ENCODE measurements at regions of chr19 and their contacts with region 1.

Region 1: GRCh38 chr19:36139473-36140303 is at the start of gene CAPNS1:
- DNase-seq: peak; percentile 91 to 96
- ATAC-seq: peak; percentile 68 to 88 (median 78)
- H3K4me3 ChIP-seq: peak within 1 kb of the TSS; percentile 94
- H3K4me3 Mint-ChIP-seq: peak within 1 kb of the TSS; percentile 96
- H3K27ac ChIP-seq: peak within 1 kb of the TSS; percentile 76
- H3K27ac Mint-ChIP-seq: peak within 1 kb of the TSS; percentile 88 to 90
- H3K4me1 ChIP-seq: peaks cover 19% of the 10 kb centered on the region
- H3K4me1 Mint-ChIP-seq: peaks cover 17 to 29% of the 10 kb centered on the region in 2 donors
- H3K27me3 ChIP-seq: no peaks in the 10 kb centered on the region
- H3K27me3 Mint-ChIP-seq: no peaks in the 10 kb centered on the region
- CTCF ChIP-seq: no peak
- total RNA-seq, gene CAPNS1: 569 to 637 (median 578) TPM

Region 2: DNA sequence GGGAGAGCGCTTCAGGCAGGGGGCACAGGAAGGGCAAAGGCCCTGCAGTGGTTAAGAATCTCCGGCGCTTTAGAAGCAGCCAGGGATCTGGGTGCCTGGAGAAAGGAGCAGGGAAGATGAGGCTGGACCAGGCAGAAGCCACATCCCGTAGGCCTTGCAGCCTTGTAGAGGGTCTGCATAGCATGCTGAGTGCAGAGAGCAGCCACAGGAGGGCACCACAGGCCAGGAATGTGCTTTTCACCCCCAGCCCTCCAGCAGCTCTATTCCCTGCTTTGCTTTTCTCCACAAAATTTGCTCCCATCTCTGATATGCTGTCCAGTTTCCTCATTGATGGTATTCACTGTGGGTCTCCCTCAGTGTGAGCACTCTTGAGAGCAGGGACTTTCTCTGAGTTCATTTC is 79.3 kb before region 1 on chr19:
- intact Hi-C with region 1: no loop called
- DNase-seq: peak in 1 of 2 donors; percentile 48
- ATAC-seq: peak in 1 of 3 donors; percentile 46
- H3K4me3 ChIP-seq: no peak overlapping the region
- H3K4me3 Mint-ChIP-seq: no peak overlapping the region
- H3K27ac ChIP-seq: no peak overlapping the region
- H3K27ac Mint-ChIP-seq: no peak overlapping the region
- H3K4me1 ChIP-seq: peaks cover 2% of the 10 kb centered on the region
- H3K4me1 Mint-ChIP-seq: peaks cover 3 to 7% of the 10 kb centered on the region in 2 donors
- H3K27me3 ChIP-seq: no peaks in the 10 kb centered on the region
- H3K27me3 Mint-ChIP-seq: no peaks in the 10 kb centered on the region
- CTCF ChIP-seq: no peak

Region 3: DNA sequence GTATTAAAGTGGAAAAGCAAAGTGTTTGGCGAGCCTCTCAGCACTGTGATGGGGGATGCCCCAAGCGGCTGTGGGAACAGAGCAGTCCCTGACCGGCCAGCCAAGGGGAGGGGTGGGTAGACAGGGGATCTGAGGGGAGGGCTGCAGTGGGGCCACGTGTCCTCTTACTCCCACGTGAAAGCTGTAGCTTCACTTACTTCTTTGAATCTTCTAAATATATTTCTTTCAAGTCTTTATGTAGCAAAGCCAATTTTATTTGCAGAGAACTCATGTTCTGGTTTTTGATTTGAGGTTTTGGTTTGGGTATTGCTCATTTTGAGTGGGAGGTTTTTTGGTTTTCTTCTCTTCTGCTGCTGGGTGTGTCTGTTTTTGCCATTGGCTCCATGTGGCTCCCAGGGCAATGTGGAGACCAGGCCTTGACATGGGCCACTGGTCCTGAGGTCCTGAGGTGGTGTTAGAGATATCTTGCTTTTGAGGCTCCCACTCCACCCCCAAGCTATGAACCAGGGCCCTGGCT is 46.5 kb before region 1 on chr19:
- intact Hi-C with region 1: no loop called
- DNase-seq: no peak
- ATAC-seq: no peak
- H3K4me3 ChIP-seq: no peak overlapping the region
- H3K4me3 Mint-ChIP-seq: no peak overlapping the region
- H3K27ac ChIP-seq: no peak overlapping the region
- H3K27ac Mint-ChIP-seq: no peak overlapping the region
- H3K4me1 ChIP-seq: no peaks in the 10 kb centered on the region
- H3K4me1 Mint-ChIP-seq: no peaks in the 10 kb centered on the region
- H3K27me3 ChIP-seq: no peaks in the 10 kb centered on the region
- H3K27me3 Mint-ChIP-seq: no peaks in the 10 kb centered on the region
- CTCF ChIP-seq: no peak

Region 4: DNA sequence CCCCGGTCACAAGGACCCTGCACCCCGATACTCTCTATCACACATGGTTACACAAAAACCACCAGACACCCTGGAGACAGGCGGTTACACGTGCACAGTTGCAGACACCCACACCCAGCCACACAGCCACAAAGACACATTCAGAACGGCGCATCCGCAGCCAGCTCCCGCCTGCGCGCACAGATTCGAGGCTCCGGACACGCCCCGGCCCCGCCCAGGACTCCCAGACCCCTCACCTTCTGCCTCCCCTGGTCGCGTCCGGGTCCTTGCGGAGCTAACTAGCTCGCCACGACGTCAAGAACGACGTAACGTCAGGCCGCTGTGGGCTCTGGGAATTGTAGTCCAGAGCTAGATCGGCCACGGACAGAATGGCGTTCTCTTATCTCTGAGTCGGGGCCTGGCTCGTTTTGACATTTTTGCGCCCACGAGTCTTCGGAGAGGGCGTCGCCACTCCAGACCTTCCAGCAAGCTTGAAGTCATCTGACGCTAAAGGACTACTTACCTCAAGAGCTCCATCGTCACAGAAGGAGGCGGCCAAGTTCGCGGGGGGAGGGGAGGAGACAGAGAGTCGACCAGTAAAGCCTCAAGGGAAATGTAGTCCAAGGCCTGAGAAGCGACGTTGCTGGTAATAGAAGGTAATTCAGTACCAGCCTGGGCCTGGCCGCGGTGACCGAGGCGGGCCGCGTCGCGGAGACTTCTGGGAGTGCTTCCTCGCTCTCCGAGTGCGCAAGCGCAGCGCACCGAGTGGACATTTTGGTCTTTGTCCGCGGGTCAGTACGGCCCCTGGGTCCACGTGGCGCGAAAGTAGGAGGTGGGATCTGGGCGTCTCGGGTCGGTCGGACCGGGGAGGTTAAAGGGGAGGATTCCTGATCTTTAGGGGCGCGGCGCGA is 74.9 kb after region 1 on chr19 and contains the starts of genes ZNF146 and ZNF565:
- intact Hi-C with region 1: loop called (anchors 2 kb)
- DNase-seq: peak; percentile 90 to 97
- ATAC-seq: peak; percentile 81 to 95 (median 86)
- H3K4me3 ChIP-seq: peak within 1 kb of the TSS; percentile 92
- H3K4me3 Mint-ChIP-seq: no peak within 1 kb of the TSS
- H3K27ac ChIP-seq: peak within 1 kb of the TSS; percentile 91
- H3K27ac Mint-ChIP-seq: no peak within 1 kb of the TSS
- H3K4me1 ChIP-seq: peaks cover 18% of the 10 kb centered on the region
- H3K4me1 Mint-ChIP-seq: peaks cover 12 to 14% of the 10 kb centered on the region in 2 donors
- H3K27me3 ChIP-seq: no peaks in the 10 kb centered on the region
- H3K27me3 Mint-ChIP-seq: no peaks in the 10 kb centered on the region
- CTCF ChIP-seq: no peak
- total RNA-seq, gene ZNF146: 20.3 to 37.3 (median 21.5) TPM
- total RNA-seq, gene ZNF565: 7.7 to 19.1 (median 10.5) TPM

Region 5: DNA sequence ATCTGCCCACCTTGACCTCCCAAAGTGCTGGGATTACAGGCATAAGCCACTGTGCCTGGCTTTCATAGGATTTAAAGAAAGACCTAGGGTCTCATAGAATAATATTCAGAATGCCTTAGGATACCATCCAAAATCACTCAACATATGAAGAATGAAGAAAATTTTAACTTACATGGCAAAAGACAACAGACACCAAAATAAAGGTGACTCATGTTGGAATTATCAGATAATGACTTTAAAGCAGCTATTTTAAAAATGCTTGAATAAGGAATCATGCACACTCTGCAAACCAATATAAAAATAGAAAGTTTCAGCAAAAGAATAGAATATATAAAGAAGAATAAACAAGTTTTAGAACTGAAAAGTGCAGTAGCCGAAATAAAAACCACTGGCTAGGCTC is 320.4 kb after region 1 on chr19:
- intact Hi-C with region 1: no loop called
- DNase-seq: no peak
- ATAC-seq: no peak
- H3K4me3 ChIP-seq: no peak overlapping the region
- H3K4me3 Mint-ChIP-seq: no peak overlapping the region
- H3K27ac ChIP-seq: no peak overlapping the region
- H3K27ac Mint-ChIP-seq: no peak overlapping the region
- H3K4me1 ChIP-seq: no peaks in the 10 kb centered on the region
- H3K4me1 Mint-ChIP-seq: no peaks in the 10 kb centered on the region
- H3K27me3 ChIP-seq: no peaks in the 10 kb centered on the region
- H3K27me3 Mint-ChIP-seq: no peaks in the 10 kb centered on the region
- CTCF ChIP-seq: no peak

Measured in natural killer cell (primary cell).